Activated CD8-positive, alpha-beta T cell treated with anti-CD3 and anti-CD28 coated beads for 36 hours (primary cell): ENCODE measurements at regions of chr2 and their contacts with region 1.

Region 1: GRCh38 chr2:136117909-136118818 is at the start of gene CXCR4:
- DNase-seq: peak; percentile 87
- ATAC-seq: peak; percentile 40
- H3K4me3 Mint-ChIP-seq: peak within 1 kb of the TSS; percentile 96
- H3K27ac Mint-ChIP-seq: peak within 1 kb of the TSS; percentile 95
- H3K4me1 Mint-ChIP-seq: peaks cover 56% of the 10 kb centered on the region
- H3K27me3 Mint-ChIP-seq: no peaks in the 10 kb centered on the region
- CTCF ChIP-seq: no peak
- total RNA-seq, gene CXCR4: 97.0 to 103 TPM

Region 2: GRCh38 chr2:135985018-135985825 is 132.9 kb before region 1 on chr2 and contains the start of gene DARS1:
- CTCF ChIA-PET with region 1: no interaction called
- POLR2A ChIA-PET with region 1: interaction called, 7 read pairs
- intact Hi-C with region 1: loop called (anchors 2 kb)
- DNase-seq: peak; percentile 93
- ATAC-seq: peak; percentile 85
- H3K4me3 Mint-ChIP-seq: peak within 1 kb of the TSS; percentile 90
- H3K27ac Mint-ChIP-seq: peak within 1 kb of the TSS; percentile 97
- H3K4me1 Mint-ChIP-seq: peaks cover 45% of the 10 kb centered on the region
- H3K27me3 Mint-ChIP-seq: no peaks in the 10 kb centered on the region
- CTCF ChIP-seq: no peak
- total RNA-seq, gene DARS1: 210 to 211 TPM

Region 3: DNA sequence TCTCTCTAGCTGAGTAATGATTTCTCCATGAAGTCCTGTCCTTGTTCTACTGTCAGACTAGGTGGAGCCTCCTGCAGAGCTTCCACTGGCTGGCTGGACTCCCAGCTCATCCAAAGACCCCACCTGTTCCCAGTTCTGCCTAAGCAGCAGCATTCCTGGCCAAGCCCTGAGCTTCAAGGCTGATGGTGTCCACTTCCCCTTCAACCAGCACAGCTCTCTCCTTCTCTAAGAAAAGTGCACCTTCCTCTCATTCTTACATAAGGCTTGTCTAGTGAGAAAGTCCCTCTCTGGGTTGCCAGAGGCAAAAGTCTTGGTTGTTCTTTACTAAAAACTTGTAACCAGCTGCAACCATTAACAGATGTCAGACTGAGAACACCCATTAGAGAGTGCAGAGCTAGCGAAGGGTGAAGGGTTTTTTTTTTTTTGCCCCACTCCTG is 59.1 kb before region 1 on chr2:
- CTCF ChIA-PET with region 1: no interaction called
- POLR2A ChIA-PET with region 1: interaction called, 18 read pairs
- intact Hi-C with region 1: no loop called
- DNase-seq: no peak
- ATAC-seq: no peak
- H3K4me3 Mint-ChIP-seq: no peak overlapping the region
- H3K27ac Mint-ChIP-seq: peak overlapping the region; percentile 13
- H3K4me1 Mint-ChIP-seq: peaks cover 53% of the 10 kb centered on the region
- H3K27me3 Mint-ChIP-seq: no peaks in the 10 kb centered on the region
- CTCF ChIP-seq: no peak

Region 4: DNA sequence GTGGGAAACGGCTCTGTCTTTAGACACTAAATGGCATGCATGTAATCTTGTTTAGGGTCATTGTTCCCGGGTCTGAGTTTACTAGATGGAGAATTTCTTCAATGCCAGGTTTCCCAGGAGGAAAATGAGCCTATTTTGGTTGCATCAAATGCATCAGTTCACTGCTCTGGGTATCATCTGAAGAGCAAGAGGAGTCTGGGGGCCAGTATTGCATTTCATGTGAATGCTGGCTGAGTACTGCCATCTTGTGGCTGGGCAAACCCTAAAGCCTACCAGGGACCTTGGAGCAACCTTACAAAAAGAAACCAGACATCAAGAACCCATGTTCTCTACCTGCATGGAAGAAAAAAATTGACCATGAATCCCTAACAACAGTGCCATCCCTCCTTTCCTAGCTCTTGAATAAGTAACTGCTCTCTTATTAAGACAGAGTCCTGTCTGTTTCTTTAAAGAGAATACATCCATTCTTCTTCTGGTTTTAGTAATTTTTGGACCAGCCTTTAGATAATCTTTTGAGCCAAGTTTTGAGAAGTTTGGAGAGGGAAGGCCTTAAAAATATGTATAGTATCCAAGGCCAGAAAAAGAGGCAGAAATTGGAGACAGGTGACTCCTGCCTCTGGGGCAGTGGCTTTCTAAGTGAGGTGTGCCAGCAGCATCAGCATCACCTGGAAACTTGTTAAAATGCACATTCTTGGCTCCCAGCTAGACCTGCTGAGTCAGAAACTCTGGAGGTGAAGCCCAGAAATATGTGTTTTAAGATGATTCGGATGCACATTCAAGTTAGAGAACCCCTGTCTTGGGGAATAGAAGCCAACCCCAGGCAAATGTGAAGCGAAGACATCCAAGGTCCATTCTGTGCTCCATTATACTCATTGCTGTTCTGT is 260.8 kb after region 1 on chr2:
- CTCF ChIA-PET with region 1: interaction called, 8 read pairs
- POLR2A ChIA-PET with region 1: interaction called, 19 read pairs
- intact Hi-C with region 1: loop called (anchors 5 kb)
- DNase-seq: peak; percentile 86
- ATAC-seq: no peak
- H3K4me3 Mint-ChIP-seq: no peak overlapping the region
- H3K27ac Mint-ChIP-seq: no peak overlapping the region
- H3K4me1 Mint-ChIP-seq: peaks cover 82% of the 10 kb centered on the region
- H3K27me3 Mint-ChIP-seq: no peaks in the 10 kb centered on the region
- CTCF ChIP-seq: peak; percentile 90

Region 5: DNA sequence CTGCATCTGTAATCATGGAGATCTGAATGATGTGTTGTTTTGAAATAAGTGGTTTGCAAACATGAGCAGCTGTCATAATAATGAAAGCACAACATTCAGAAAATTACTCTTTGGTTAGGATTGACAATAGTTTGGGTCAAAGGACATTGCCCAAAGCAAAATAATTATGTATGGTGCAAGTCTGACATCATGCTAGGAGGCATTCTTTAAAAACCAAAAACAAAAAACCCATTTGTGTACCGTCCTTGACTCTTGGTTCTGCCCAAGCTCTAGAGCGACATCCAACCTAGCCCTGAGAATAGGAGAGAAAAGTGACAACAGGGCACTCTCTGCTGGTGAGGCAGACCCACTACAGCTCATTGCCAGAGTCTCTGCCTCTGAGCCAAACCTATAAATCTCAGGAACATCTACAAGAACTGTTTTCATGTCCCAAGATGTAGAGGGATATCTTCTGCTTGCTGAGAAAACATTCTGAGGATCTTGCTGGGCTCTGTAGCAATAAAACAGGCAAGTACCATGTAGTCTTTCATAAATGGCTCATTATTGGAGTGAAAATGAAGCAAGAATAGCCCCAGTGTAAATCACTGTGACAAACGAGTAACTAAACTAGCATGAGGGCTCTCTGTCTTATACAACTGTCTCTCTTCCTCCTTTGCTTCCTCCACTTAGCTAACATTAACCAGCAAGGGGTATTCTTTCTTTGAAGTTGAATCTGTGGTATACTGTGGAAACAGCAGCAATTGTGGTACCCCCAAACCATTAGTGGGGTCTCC is 266.6 kb after region 1 on chr2:
- CTCF ChIA-PET with region 1: interaction called, 8 read pairs
- POLR2A ChIA-PET with region 1: interaction called, 19 read pairs
- intact Hi-C with region 1: loop called (anchors 5 kb)
- DNase-seq: peak; percentile 61
- ATAC-seq: peak; percentile 50
- H3K4me3 Mint-ChIP-seq: no peak overlapping the region
- H3K27ac Mint-ChIP-seq: peak overlapping the region; percentile 35
- H3K4me1 Mint-ChIP-seq: peaks cover 43% of the 10 kb centered on the region
- H3K27me3 Mint-ChIP-seq: no peaks in the 10 kb centered on the region
- CTCF ChIP-seq: peak; percentile 89

Region 6: GRCh38 chr2:136407952-136408318 is 289.8 kb after region 1 on chr2:
- CTCF ChIA-PET with region 1: no interaction called
- POLR2A ChIA-PET with region 1: no interaction called
- intact Hi-C with region 1: no loop called
- DNase-seq: peak; percentile 16
- ATAC-seq: peak; percentile 68
- H3K4me3 Mint-ChIP-seq: no peak overlapping the region
- H3K27ac Mint-ChIP-seq: no peak overlapping the region
- H3K4me1 Mint-ChIP-seq: no peaks in the 10 kb centered on the region
- H3K27me3 Mint-ChIP-seq: peaks cover 15% of the 10 kb centered on the region
- CTCF ChIP-seq: no peak